ENCODE measurements at regions of chr2 and their contacts with region 1.

Region 1: DNA sequence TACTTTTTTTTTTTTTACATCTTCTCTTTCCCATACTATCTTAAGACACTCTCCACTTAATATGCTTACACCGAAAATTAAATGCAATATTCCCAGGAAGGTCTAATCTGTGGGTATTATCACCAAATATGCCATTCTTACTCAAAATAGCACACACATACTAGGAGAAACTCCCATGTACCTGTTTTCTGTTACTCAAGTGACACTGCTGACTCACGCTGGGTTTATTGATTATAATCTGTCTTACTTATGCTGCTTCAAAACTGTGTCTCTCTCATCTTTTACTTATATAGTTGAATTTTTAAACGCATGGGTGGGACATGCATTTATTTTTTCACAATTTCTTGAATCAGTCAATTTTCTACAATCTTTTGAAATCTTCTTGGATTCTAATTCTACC is 29.9 kb downstream of the MRPL19 start:
- DNase-seq: no peak
- ATAC-seq: no peak
- H3K4me3 ChIP-seq: no peak overlapping the region
- H3K27ac ChIP-seq: no peak overlapping the region
- H3K4me1 ChIP-seq: no peaks in the 10 kb centered on the region
- H3K27me3 ChIP-seq: no peaks in the 10 kb centered on the region
- CTCF ChIP-seq: no peak

Region 2: GRCh38 chr2:75640621-75641121 is 35.8 kb before region 1 on chr2:
- CTCF ChIA-PET with region 1: interaction called, 4 read pairs
- POLR2A ChIA-PET with region 1: no interaction called
- in situ Hi-C with region 1: no loop called
- intact Hi-C with region 1: loop called (anchors 1 kb)
- DNase-seq: peak; percentile 63
- ATAC-seq: peak; percentile 97
- H3K4me3 ChIP-seq: no peak overlapping the region
- H3K27ac ChIP-seq: no peak overlapping the region
- H3K4me1 ChIP-seq: no peaks in the 10 kb centered on the region
- H3K27me3 ChIP-seq: peaks cover 5% of the 10 kb centered on the region; the same call in 1 of the 2 replicates
- CTCF ChIP-seq: peak; percentile 99